CD4-positive, alpha-beta memory T cell (primary cell): ENCODE measurements at regions of chr9 and their contacts with region 1.

Region 1: GRCh38 chr9:131502781-131503625 is at the start of gene POMT1:
- DNase-seq: peak; percentile 90 to 91 (median 91)
- H3K4me3 ChIP-seq: peak within 1 kb of the TSS; percentile 74 to 86
- H3K4me3 Mint-ChIP-seq: peak within 1 kb of the TSS; percentile 92 to 98 (median 94)
- H3K27ac ChIP-seq: peak within 1 kb of the TSS; percentile 74
- H3K27ac Mint-ChIP-seq: peak within 1 kb of the TSS; percentile 79 to 97 (median 92)
- H3K4me1 ChIP-seq: peaks cover 67% of the 10 kb centered on the region
- H3K4me1 Mint-ChIP-seq: peaks cover 44 to 79% (median 56%) of the 10 kb centered on the region in 4 donors
- H3K27me3 ChIP-seq: no peaks in the 10 kb centered on the region
- H3K27me3 Mint-ChIP-seq: no peaks in the 10 kb centered on the region
- total RNA-seq, gene POMT1: 52.1 to 58.5 TPM

Region 2: DNA sequence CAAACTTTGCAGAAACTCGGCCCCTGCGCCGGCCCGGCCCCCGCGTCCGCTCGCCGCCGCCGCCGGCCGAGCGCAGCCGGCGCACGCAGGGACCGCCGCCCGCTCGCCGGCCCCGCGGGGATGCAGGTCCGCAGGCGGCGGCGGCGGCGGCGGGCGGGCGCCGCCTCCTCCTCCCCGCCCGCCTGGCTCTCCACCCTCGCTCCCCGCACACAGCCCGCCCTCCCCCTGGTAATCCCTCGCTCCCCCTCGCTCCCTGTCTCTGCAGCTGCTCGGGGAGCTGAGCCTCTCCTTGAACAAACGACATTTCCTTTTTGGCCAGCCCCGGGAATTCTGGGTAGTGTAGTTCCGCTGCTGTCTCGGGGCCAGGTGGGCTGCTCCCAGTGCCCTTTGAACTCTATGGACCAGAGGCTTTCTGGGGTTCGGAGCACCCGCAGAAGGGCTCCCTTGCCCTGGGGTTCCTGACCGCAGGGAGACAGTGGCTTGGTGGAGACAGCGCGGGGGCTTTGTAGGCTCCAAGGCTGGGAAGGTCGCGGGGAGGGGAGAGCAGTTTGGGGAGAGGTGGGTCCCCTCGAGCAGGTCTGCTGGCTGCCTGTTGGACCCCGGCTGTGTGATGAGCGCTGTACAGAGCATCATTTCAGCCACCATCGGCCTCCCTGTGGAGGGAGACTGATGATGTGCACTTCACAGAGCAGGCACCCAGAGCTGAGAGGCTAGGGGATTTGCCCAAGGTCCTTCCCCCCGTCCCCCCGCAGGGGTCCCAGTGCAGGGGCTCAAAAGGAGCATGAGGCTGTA is 224.9 kb before region 1 on chr9:
- CTCF ChIA-PET with region 1: no interaction called
- POLR2A ChIA-PET with region 1: no interaction called
- intact Hi-C with region 1: loop called (anchors 10 kb)
- DNase-seq: peak; percentile 60 to 78 (median 61)
- H3K4me3 ChIP-seq: peak overlapping the region; percentile 21 to 65
- H3K4me3 Mint-ChIP-seq: peak overlapping the region; percentile 84 to 93 (median 91)
- H3K27ac ChIP-seq: peak overlapping the region; percentile 79
- H3K27ac Mint-ChIP-seq: peak overlapping the region; percentile 92 to 95 (median 94)
- H3K4me1 ChIP-seq: peaks cover 27% of the 10 kb centered on the region
- H3K4me1 Mint-ChIP-seq: peaks cover 22 to 49% (median 25%) of the 10 kb centered on the region in 4 donors
- H3K27me3 ChIP-seq: no peaks in the 10 kb centered on the region
- H3K27me3 Mint-ChIP-seq: peaks cover 2 to 3% of the 10 kb centered on the region in 2 donors

Region 3: DNA sequence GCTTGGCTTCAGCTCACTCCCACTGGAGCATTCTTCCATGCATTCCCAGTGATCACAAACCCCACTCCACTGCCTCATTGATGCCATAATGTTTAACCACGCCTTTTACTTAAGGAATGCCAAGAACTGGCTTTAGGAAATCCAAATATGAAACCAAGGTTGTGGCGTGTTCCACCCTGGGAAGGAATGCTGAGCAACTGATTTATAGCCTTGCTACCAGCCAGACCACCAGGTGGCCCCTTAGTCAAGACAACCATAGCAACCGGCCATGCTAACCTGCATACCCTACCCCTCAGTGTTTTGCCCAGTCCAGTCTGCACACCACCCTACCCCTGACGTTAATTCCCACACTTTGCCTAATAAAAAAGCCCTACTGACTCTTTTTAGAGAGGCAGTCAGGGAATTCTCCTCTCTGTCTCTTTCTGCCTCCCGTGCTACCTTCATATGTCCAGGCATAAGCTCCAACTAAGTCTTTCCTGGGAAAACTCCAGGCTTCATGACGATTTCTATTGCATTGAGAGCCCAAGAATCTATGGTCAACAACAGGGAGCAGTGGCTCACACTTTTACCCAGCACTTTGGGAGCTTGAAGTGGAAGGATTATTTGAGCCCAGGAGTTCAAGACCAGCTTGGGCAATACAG is 136.1 kb before region 1 on chr9:
- CTCF ChIA-PET with region 1: no interaction called
- POLR2A ChIA-PET with region 1: no interaction called
- intact Hi-C with region 1: loop called (anchors 5 kb)
- DNase-seq: no peak
- H3K4me3 ChIP-seq: no peak overlapping the region
- H3K4me3 Mint-ChIP-seq: no peak overlapping the region
- H3K27ac ChIP-seq: no peak overlapping the region
- H3K27ac Mint-ChIP-seq: no peak overlapping the region
- H3K4me1 ChIP-seq: peaks cover 1% of the 10 kb centered on the region
- H3K4me1 Mint-ChIP-seq: peaks cover 2 to 5% (median 3%) of the 10 kb centered on the region in 4 donors
- H3K27me3 ChIP-seq: no peaks in the 10 kb centered on the region
- H3K27me3 Mint-ChIP-seq: no peaks in the 10 kb centered on the region

Region 4: GRCh38 chr9:131478421-131478868 is 24.6 kb before region 1 on chr9:
- CTCF ChIA-PET with region 1: interaction called, 13 read pairs
- POLR2A ChIA-PET with region 1: interaction called, 6 read pairs
- intact Hi-C with region 1: no loop called
- DNase-seq: peak in 4 of 5 donors; percentile 39 to 55 (median 48)
- H3K4me3 ChIP-seq: no peak overlapping the region
- H3K4me3 Mint-ChIP-seq: peak overlapping the region in 1 of 8 donors; percentile 23
- H3K27ac ChIP-seq: no peak overlapping the region
- H3K27ac Mint-ChIP-seq: peak overlapping the region in 4 of 7 donors; percentile 17 to 80 (median 66)
- H3K4me1 ChIP-seq: no peaks in the 10 kb centered on the region
- H3K4me1 Mint-ChIP-seq: peaks cover 0 to 5% (median under 1%) of the 10 kb centered on the region in 4 donors
- H3K27me3 ChIP-seq: no peaks in the 10 kb centered on the region
- H3K27me3 Mint-ChIP-seq: no peaks in the 10 kb centered on the region

Region 5: GRCh38 chr9:131530920-131531832 is 28.2 kb after region 1 on chr9 and contains the start of gene UCK1:
- CTCF ChIA-PET with region 1: no interaction called
- POLR2A ChIA-PET with region 1: interaction called, 10 read pairs
- intact Hi-C with region 1: loop called (anchors 1 kb)
- DNase-seq: peak; percentile 72 to 76 (median 72)
- H3K4me3 ChIP-seq: peak within 1 kb of the TSS in 1 of 2 donors; percentile 73
- H3K4me3 Mint-ChIP-seq: peak within 1 kb of the TSS; percentile 69 to 84 (median 74)
- H3K27ac ChIP-seq: peak within 1 kb of the TSS; percentile 69
- H3K27ac Mint-ChIP-seq: peak within 1 kb of the TSS in 6 of 7 donors; percentile 29 to 79 (median 54)
- H3K4me1 ChIP-seq: peaks cover 42% of the 10 kb centered on the region
- H3K4me1 Mint-ChIP-seq: peaks cover 12 to 52% (median 25%) of the 10 kb centered on the region in 4 donors
- H3K27me3 ChIP-seq: no peaks in the 10 kb centered on the region
- H3K27me3 Mint-ChIP-seq: no peaks in the 10 kb centered on the region
- total RNA-seq, gene UCK1: 36.1 to 39.7 TPM

Region 6: DNA sequence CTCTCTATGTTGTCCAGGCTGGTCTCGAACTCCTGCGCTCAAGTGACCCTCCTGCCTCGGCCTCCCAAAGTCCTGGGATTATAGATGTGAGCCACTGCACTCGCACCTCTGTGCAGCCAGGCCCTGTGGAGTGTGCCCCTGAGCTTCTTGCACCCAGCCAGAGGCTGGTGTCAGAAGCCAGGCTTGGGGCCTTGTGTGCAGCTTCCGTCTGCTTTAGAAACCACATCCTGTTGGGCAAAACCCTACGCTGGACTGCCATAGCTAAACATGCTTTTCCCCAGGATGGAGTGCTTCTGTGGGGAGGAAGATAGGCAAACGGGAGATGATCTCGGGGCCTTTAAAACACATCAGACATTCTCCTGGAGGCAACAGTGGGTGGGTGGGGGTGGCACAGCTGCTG is 82.4 kb after region 1 on chr9:
- CTCF ChIA-PET with region 1: interaction called, 5 read pairs
- POLR2A ChIA-PET with region 1: interaction called, 10 read pairs
- intact Hi-C with region 1: no loop called
- DNase-seq: peak; percentile 56 to 77 (median 60)
- H3K4me3 ChIP-seq: no peak overlapping the region
- H3K4me3 Mint-ChIP-seq: peak overlapping the region; percentile 67 to 87 (median 78)
- H3K27ac ChIP-seq: peak overlapping the region; percentile 6
- H3K27ac Mint-ChIP-seq: peak overlapping the region; percentile 85 to 97 (median 92)
- H3K4me1 ChIP-seq: peaks cover 35% of the 10 kb centered on the region
- H3K4me1 Mint-ChIP-seq: peaks cover 24 to 57% (median 32%) of the 10 kb centered on the region in 4 donors
- H3K27me3 ChIP-seq: no peaks in the 10 kb centered on the region
- H3K27me3 Mint-ChIP-seq: no peaks in the 10 kb centered on the region

Region 7: GRCh38 chr9:131747356-131747755 is 244.4 kb after region 1 on chr9:
- CTCF ChIA-PET with region 1: interaction called, 3 read pairs
- POLR2A ChIA-PET with region 1: interaction called, 6 read pairs
- intact Hi-C with region 1: loop called (anchors 5 kb)
- DNase-seq: peak in 4 of 5 donors; percentile 52 to 57 (median 56)
- H3K4me3 ChIP-seq: no peak overlapping the region
- H3K4me3 Mint-ChIP-seq: no peak overlapping the region
- H3K27ac ChIP-seq: no peak overlapping the region
- H3K27ac Mint-ChIP-seq: peak overlapping the region in 5 of 7 donors; percentile 7 to 65 (median 46)
- H3K4me1 ChIP-seq: peaks cover 29% of the 10 kb centered on the region
- H3K4me1 Mint-ChIP-seq: peaks cover 27 to 36% (median 29%) of the 10 kb centered on the region in 4 donors
- H3K27me3 ChIP-seq: no peaks in the 10 kb centered on the region
- H3K27me3 Mint-ChIP-seq: no peaks in the 10 kb centered on the region